ENCODE measurements at regions of chr19 and their contacts with region 1.

Region 1: DNA sequence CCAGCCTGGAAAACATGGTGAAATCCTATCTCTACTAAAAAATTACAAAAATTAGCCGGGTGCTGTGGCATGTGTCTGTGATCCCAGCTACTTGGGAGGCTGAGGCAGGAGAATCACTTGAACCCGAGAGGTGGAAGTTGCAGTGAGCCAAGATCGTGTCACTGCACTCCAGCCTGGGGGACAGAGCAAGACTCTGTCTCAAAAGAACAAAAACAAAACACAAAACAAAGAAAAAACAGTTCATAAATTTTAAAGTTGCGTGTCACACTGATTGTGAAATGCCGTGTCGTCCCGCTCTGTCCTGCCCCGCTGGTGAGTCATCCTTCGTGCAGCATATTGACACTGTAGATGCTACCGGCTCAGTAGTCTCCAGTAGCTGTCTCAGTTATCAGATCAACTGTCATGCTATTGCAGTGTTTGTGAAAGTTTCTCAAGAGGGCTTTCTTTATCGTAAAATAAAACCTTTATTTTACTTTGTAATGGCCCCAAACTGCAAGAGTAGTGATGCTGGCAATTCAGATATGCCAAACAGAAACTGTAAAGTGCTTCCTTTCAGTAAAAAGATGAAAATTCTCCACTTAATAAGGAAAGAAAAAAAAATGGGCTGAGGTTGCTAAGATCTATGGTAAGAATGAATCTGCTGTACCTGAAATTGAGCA is 36.4 kb upstream of the IGFL1 start:
- DNase-seq: peak; percentile 84 to 91
- ATAC-seq: peak; percentile 37 to 76; a peak in 4 of 6 replicates
- H3K4me3 ChIP-seq: no peak overlapping the region
- H3K27ac ChIP-seq: peak overlapping the region; percentile 64 to 83
- H3K4me1 ChIP-seq: peaks cover 95% of the 10 kb centered on the region
- CTCF ChIP-seq: no peak
- EP300 ChIP-seq: peak in 1 of 2 experiments; percentile 49; a peak in 2 of 5 replicates
- POLR2A ChIP-seq: no peak
- RAD21 ChIP-seq: peak in 1 of 2 experiments; percentile 39; a peak in 1 of 5 replicates

Region 2: DNA sequence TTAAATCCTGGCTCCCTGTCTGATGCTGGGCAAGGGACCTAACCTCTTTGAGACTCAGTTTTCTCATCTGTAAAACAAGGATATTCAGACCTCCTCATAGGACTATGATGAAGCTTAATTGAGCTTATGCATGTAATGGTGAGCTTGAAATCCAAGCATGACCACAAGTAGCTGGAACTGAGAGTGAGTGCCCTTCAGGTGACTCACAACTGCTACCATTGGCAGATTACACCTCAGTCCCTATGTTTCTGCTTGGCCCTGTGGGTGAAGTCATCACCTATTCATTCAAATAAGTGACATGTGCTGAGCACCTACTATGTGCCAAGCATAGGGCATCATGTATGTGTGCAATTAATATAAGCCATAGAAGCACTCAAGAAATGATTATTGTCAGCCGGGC is 245.2 kb before region 1 on chr19:
- CTCF ChIA-PET with region 1: no interaction called
- POLR2A ChIA-PET with region 1: no interaction called
- DNase-seq: no peak
- ATAC-seq: no peak
- H3K4me3 ChIP-seq: no peak overlapping the region
- H3K27ac ChIP-seq: no peak overlapping the region
- H3K4me1 ChIP-seq: peaks cover 5% of the 10 kb centered on the region
- CTCF ChIP-seq: no peak
- EP300 ChIP-seq: no peak
- POLR2A ChIP-seq: no peak
- RAD21 ChIP-seq: no peak

Region 3: DNA sequence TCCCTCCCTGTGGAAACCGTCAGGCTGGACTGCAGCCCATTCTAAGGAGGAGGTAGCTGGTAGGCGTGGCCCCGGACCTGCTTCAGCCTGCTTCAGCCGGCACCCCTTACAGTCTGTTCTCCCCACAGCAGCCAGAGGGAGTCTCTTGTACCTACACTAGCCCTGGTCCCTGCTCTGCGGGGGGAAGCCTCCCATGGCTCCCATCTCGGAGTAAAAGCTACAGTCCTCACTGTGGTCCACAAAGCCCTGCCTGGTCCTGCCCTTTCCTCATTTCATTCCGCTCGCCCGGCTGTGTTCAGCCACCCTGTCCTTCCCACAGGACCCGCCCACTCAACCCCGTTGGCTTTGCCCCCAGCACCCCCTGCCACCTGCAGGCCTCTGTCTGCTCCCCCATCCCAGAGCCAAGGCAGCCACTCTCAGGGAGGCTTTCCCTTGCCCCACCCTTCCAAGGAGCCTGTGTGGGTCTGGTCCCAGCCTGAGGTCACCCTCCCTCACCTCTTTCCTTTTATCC is 171.5 kb before region 1 on chr19:
- CTCF ChIA-PET with region 1: interaction called, 46 read pairs
- POLR2A ChIA-PET with region 1: no interaction called
- DNase-seq: peak in 1 of 2 experiments; percentile 34
- ATAC-seq: peak; percentile 11 to 28; a peak in 3 of 6 replicates
- H3K4me3 ChIP-seq: no peak overlapping the region
- H3K27ac ChIP-seq: no peak overlapping the region
- H3K4me1 ChIP-seq: peaks cover 4% of the 10 kb centered on the region; the same call in 2 of the 3 replicates
- CTCF ChIP-seq: no peak
- EP300 ChIP-seq: no peak
- POLR2A ChIP-seq: no peak
- RAD21 ChIP-seq: no peak

Region 4: DNA sequence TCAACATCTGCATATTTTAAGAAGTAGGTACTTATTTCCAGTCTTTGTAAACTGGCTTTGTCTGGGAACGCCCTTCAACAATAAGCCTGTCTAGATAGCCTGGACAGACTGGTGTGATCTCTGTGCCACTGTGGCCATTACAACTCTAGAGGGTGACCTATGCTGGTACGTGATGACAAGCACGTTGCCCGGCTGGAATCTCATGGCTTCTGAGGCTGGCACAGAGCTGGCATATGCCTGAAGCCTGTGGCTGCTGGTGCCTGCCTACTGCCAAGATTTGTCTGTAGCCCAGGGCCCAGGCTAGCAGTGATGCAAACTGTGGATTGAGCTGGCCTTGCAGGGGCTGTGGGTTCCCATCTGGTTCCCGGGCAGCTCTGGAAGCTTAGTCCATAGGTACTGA is 102.7 kb before region 1 on chr19:
- CTCF ChIA-PET with region 1: interaction called, 390 read pairs
- POLR2A ChIA-PET with region 1: no interaction called
- DNase-seq: no peak
- ATAC-seq: no peak
- H3K4me3 ChIP-seq: no peak overlapping the region
- H3K27ac ChIP-seq: no peak overlapping the region
- H3K4me1 ChIP-seq: no peaks in the 10 kb centered on the region
- CTCF ChIP-seq: no peak
- EP300 ChIP-seq: no peak
- POLR2A ChIP-seq: no peak
- RAD21 ChIP-seq: no peak

Region 5: GRCh38 chr19:46159418-46160232 is 33.5 kb before region 1 on chr19:
- CTCF ChIA-PET with region 1: interaction called, 15 read pairs
- POLR2A ChIA-PET with region 1: no interaction called
- DNase-seq: no peak
- ATAC-seq: no peak
- H3K4me3 ChIP-seq: no peak overlapping the region
- H3K27ac ChIP-seq: no peak overlapping the region
- H3K4me1 ChIP-seq: peaks cover 7% of the 10 kb centered on the region; the same call in 1 of the 3 replicates
- CTCF ChIP-seq: no peak
- EP300 ChIP-seq: no peak
- POLR2A ChIP-seq: no peak
- RAD21 ChIP-seq: no peak

Region 6: GRCh38 chr19:46211201-46211881 is 18.2 kb after region 1 on chr19:
- CTCF ChIA-PET with region 1: interaction called, 63 read pairs
- POLR2A ChIA-PET with region 1: interaction called, 4 read pairs
- DNase-seq: peak in 1 of 2 experiments; percentile 80
- ATAC-seq: peak; percentile 76 to 83
- H3K4me3 ChIP-seq: no peak overlapping the region
- H3K27ac ChIP-seq: peak overlapping the region; percentile 71 to 80
- H3K4me1 ChIP-seq: peaks cover 68% of the 10 kb centered on the region
- CTCF ChIP-seq: no peak
- EP300 ChIP-seq: peak in 1 of 2 experiments; percentile 46; a peak in 1 of 5 replicates
- POLR2A ChIP-seq: no peak
- RAD21 ChIP-seq: peak in 1 of 2 experiments; percentile 21; a peak in 1 of 5 replicates

Region 7: GRCh38 chr19:46254776-46255175 is 61.7 kb after region 1 on chr19:
- CTCF ChIA-PET with region 1: interaction called, 83 read pairs
- POLR2A ChIA-PET with region 1: no interaction called
- DNase-seq: no peak
- ATAC-seq: no peak
- H3K4me3 ChIP-seq: no peak overlapping the region
- H3K27ac ChIP-seq: no peak overlapping the region
- H3K4me1 ChIP-seq: peaks cover 21% of the 10 kb centered on the region
- CTCF ChIP-seq: no peak
- EP300 ChIP-seq: no peak
- POLR2A ChIP-seq: no peak
- RAD21 ChIP-seq: no peak

Region 8: GRCh38 chr19:46271481-46272197 is 78.5 kb after region 1 on chr19:
- CTCF ChIA-PET with region 1: interaction called, 38 read pairs
- POLR2A ChIA-PET with region 1: no interaction called
- DNase-seq: peak; percentile 77 to 87
- ATAC-seq: peak; percentile 96 to 99
- H3K4me3 ChIP-seq: no peak overlapping the region
- H3K27ac ChIP-seq: peak overlapping the region; percentile 75 to 83
- H3K4me1 ChIP-seq: peaks cover 39% of the 10 kb centered on the region
- CTCF ChIP-seq: no peak
- EP300 ChIP-seq: peak; percentile 26 to 73; a peak in 2 of 5 replicates
- POLR2A ChIP-seq: no peak
- RAD21 ChIP-seq: no peak

Region 9: DNA sequence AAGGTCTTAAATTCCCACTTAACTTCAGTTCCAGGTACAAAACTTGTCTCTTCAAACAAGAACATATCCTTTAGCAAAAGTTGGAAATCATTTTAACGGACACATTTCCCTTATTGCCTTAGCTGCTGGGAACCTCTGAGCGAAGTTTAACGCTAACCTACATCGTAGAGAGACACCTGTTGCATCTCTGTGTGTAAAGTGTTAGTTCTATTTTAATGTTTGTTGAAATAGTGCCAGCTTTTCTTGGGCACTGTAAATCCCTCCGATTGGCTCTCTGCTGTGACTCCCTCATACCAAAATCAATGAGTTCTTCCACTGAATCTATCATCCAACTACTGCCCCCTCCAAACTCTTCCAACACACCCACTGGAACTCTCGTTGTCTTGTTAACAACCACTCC is 101.4 kb after region 1 on chr19:
- CTCF ChIA-PET with region 1: no interaction called
- POLR2A ChIA-PET with region 1: no interaction called
- DNase-seq: no peak
- ATAC-seq: no peak
- H3K4me3 ChIP-seq: no peak overlapping the region
- H3K27ac ChIP-seq: no peak overlapping the region
- H3K4me1 ChIP-seq: peaks cover 20% of the 10 kb centered on the region
- CTCF ChIP-seq: no peak
- EP300 ChIP-seq: no peak
- POLR2A ChIP-seq: no peak
- RAD21 ChIP-seq: no peak